HCT116 (cell line): ENCODE measurements at regions of chr11 and their contacts with region 1.

Region 1: GRCh38 chr11:17760102-17761029 is 25.8 kb downstream of the KCNC1 start:
- DNase-seq: peak; percentile 51
- ATAC-seq: peak; percentile 99
- H3K4me3 ChIP-seq: no peak overlapping the region
- H3K27ac ChIP-seq: no peak overlapping the region
- H3K4me1 ChIP-seq: peaks cover 0 to 9% of the 10 kb centered on the region in 2 experiments; a peak in 2 of 4 replicates
- H3K27me3 ChIP-seq: 0 out of 2 replicates have a peak, but pooled peaks cover 5% of the 10 kb centered on the region
- CTCF ChIP-seq: peak; percentile 72 to 78 (median 78)
- POLR2A ChIP-seq: no peak
- RAD21 ChIP-seq: peak; percentile 87

Region 2: GRCh38 chr11:17827006-17827405 is 66.6 kb after region 1 on chr11:
- CTCF ChIA-PET with region 1: no interaction called
- POLR2A ChIA-PET with region 1: no interaction called
- RAD21 ChIA-PET with region 1: no interaction called
- intact Hi-C with region 1: loop called (anchors 5 kb)
- DNase-seq: no peak
- ATAC-seq: peak; percentile 67
- H3K4me3 ChIP-seq: no peak overlapping the region
- H3K27ac ChIP-seq: no peak overlapping the region
- H3K4me1 ChIP-seq: no peaks in the 10 kb centered on the region
- H3K27me3 ChIP-seq: no peaks in the 10 kb centered on the region
- CTCF ChIP-seq: peak; percentile 37 to 48 (median 41); a peak in 4 of 6 replicates
- POLR2A ChIP-seq: no peak
- RAD21 ChIP-seq: peak; percentile 60

Region 3: GRCh38 chr11:17906436-17906835 is 146.1 kb after region 1 on chr11:
- CTCF ChIA-PET with region 1: interaction called, 7 read pairs
- POLR2A ChIA-PET with region 1: no interaction called
- RAD21 ChIA-PET with region 1: interaction called in 1 of 2 experiments, 5 read pairs
- intact Hi-C with region 1: loop called (anchors 2 kb)
- DNase-seq: no peak
- ATAC-seq: peak; percentile 98
- H3K4me3 ChIP-seq: no peak overlapping the region
- H3K27ac ChIP-seq: no peak overlapping the region
- H3K4me1 ChIP-seq: no peaks in the 10 kb centered on the region
- H3K27me3 ChIP-seq: no peaks in the 10 kb centered on the region
- CTCF ChIP-seq: peak in 2 of 3 experiments; percentile 24 to 55; a peak in 3 of 6 replicates
- POLR2A ChIP-seq: no peak
- RAD21 ChIP-seq: peak; percentile 56

Region 4: DNA sequence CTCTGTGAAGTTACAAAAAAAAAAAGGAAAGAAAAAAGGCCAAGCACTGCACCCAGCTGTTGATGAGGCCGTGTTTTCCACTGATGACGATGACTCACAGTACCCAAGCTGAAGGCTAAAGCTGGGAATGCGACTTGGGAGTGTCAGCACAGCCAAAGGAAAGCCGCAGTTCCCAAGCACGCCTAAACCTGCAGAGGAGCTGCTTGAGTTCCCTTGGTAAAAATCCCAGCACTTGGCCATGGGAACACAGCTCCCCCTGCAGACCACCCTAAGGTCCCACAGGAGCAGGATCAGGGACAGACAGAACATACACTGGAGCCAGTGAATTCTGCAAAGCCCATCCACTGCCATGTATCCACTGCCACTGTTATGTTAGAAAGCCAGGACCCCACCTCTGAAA is 212.6 kb after region 1 on chr11:
- CTCF ChIA-PET with region 1: interaction called, 16 read pairs
- POLR2A ChIA-PET with region 1: interaction called, 3 read pairs
- RAD21 ChIA-PET with region 1: interaction called, 3 read pairs
- intact Hi-C with region 1: loop called (anchors 1 kb)
- DNase-seq: peak; percentile 60
- ATAC-seq: peak; percentile 97
- H3K4me3 ChIP-seq: no peak overlapping the region
- H3K27ac ChIP-seq: no peak overlapping the region
- H3K4me1 ChIP-seq: peaks cover 0 to 7% of the 10 kb centered on the region in 2 experiments; a peak in 1 of 4 replicates
- H3K27me3 ChIP-seq: no peaks in the 10 kb centered on the region
- CTCF ChIP-seq: peak; percentile 57 to 76 (median 64); a peak in 5 of 6 replicates
- POLR2A ChIP-seq: no peak
- RAD21 ChIP-seq: peak; percentile 62

Region 5: DNA sequence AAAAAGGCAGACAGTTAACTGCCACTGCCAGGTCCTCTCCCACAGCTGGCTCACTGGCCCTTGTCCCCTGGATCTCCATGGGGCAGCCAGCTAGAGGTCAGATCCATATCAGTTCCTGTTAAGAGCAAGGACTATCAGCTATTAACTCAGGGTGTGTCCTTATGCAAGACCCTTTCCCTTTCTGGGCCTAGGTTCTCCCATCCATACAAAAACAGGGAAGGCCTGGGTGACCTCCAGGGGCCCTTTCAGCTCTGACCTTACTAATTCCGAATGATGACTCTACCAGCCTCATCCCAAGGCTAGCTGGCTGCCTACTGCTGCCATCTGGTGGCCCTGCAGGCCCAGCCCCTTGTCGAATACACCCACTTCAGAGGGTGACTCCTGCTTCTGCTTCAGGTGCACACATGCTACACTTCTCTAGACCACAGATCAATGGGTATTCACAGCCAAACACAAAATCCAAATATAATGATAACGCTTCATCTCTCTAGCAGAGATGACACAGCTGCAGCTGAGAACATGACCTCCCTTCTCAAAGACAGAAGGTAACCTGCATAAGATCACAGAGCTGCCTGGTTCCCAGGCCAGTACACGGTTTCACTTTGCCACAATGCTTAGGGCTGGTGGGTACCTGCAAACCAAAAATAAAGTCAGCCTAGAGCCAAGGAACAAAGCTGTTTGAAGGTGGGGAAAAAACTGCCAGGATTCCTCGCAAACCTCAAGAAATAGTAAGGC is 218.4 kb after region 1 on chr11:
- CTCF ChIA-PET with region 1: interaction called, 16 read pairs
- POLR2A ChIA-PET with region 1: interaction called, 3 read pairs
- RAD21 ChIA-PET with region 1: no interaction called
- intact Hi-C with region 1: loop called (anchors 1 kb)
- DNase-seq: no peak
- ATAC-seq: peak; percentile 95
- H3K4me3 ChIP-seq: no peak overlapping the region
- H3K27ac ChIP-seq: no peak overlapping the region
- H3K4me1 ChIP-seq: no peaks in the 10 kb centered on the region
- H3K27me3 ChIP-seq: no peaks in the 10 kb centered on the region
- CTCF ChIP-seq: peak; percentile 72 to 81 (median 78); a peak in 5 of 6 replicates
- POLR2A ChIP-seq: no peak
- RAD21 ChIP-seq: peak; percentile 69